OCI-LY7 (cell line): ENCODE measurements at regions of chr7 and their contacts with region 1.

Region 1: GRCh38 chr7:2403014-2403717 is at the start of gene CHST12:
- DNase-seq: peak; percentile 96
- H3K4me3 ChIP-seq: peak within 1 kb of the TSS; percentile 91
- H3K27ac ChIP-seq: peak within 1 kb of the TSS; percentile 21
- H3K4me1 ChIP-seq: peaks cover 50% of the 10 kb centered on the region
- CTCF ChIP-seq: no peak
- total RNA-seq, gene CHST12: 3.1 and 3.9 TPM in 2 replicates

Region 2: DNA sequence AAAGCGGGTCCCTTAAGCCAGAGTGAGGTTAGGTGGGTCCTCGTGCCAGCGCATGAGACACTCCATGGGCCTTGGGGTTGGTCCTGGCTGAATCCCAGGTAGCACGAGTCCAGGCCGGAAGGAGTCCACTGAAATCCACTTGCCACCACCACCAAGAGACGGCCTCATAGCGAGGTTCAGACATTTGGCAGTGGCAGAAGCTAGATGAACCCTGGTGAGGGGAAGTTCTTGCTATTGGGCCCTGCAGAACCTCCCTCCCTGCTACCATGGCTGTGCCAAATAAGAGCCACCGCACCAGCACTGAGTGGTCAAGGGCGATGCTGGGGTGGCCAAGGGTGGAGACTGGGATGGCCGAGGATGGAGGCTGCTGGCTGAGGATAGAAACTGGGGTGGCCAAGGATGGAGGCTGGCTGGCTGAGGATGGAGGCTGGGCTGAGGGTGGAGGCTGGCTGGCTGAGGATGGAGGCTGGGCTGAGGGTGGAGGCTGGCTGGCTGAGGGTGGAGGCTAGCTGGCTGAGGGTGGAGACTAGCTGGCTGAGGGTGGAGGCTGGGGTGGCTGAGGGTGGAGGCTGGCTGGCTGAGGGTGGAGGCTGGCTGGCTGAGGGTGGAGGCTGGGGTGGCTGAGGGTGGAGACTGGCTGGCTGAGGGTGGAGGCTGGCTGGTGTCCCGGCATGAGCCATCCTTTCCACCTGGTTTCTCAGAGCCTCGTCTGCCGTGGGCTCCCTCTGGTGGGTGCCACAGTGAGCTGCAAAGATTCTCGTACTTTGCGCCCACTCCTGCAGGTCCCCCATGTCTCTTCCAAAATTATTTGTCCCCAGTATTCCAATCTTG is 644.9 kb before region 1 on chr7:
- CTCF ChIA-PET with region 1: no interaction called
- POLR2A ChIA-PET with region 1: no interaction called
- intact Hi-C with region 1: loop called (anchors 10 kb)
- DNase-seq: peak; percentile 73
- H3K4me3 ChIP-seq: no peak overlapping the region
- H3K27ac ChIP-seq: no peak overlapping the region
- H3K4me1 ChIP-seq: peaks cover 45% of the 10 kb centered on the region
- CTCF ChIP-seq: peak; percentile 71

Region 3: DNA sequence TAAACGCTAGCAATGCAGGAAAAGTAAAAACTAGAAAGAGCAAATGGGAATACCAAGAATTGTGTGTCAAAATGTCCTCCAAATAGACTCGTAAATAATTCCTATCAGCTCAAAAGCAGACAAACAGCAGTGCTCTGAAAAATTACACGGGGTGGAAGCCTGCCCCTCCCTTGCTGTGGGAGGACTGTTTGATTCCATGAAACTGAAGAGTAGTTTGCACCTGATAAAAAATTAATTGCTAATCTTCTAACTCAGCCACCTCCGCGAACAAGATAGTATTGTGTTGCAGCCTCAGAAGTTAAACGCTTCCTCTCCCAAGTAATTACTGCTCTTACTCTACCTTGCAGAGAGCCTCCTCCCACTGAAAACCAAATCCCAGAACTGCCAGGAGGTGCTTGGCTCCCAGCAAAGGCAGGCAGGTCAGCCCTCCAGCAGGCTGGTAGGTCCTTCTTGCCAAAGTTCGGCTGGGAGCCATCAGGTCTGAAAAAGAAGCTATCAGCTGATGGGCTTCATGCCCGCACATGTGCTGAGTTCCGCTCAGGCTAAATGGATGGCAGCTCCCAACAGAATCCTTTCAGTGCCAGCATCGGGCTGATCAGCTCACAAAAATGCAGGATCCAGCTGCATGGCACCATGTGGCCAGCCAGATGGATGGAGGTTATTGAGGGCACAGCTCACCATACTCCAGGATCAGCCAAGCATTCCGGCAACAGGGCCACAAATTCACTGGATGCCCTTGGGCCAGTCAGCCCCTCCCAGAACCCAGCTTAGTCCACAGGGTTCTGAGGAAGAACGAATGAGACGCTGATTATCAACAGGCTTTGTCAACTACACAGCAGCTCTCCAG is 207.5 kb before region 1 on chr7:
- CTCF ChIA-PET with region 1: no interaction called
- POLR2A ChIA-PET with region 1: no interaction called
- intact Hi-C with region 1: no loop called
- DNase-seq: no peak
- H3K4me3 ChIP-seq: no peak overlapping the region
- H3K27ac ChIP-seq: no peak overlapping the region
- H3K4me1 ChIP-seq: no peaks in the 10 kb centered on the region
- CTCF ChIP-seq: no peak

Region 4: DNA sequence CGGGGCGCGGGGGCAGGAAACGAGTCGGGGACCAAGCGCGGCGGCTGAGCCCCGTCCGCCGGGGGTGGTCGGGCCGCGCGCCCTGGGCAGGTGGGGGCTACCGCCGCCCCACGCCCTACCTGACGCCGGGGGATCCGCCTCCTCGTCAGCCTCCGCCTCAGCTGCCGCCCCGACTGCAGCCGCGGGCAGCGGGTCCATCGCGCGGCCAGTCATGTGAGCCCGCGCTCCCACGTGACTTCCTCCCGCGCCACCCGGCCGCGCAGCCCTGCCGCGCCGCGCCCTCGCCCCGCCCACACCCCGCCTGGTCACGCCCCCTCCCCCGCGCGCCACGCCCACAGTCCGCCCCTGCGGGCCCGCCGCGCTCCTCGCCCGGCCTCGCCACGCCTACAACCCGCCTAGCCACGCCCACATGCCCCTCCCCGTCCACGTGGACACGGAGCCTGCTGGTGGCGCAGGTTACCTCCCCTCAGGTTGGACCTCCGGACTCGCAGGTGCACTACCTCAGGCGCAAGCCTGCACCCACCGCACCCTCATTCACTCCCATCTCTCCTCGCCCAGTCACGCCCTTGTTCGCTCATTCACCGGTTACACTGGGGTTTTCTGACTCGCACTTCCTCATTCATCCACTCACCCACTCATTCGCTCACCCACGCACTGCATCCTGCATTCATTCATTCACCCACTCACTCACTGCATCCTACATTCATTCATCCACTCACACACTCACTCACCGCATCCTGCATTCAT is 88.8 kb before region 1 on chr7 and contains the start of gene SNX8:
- CTCF ChIA-PET with region 1: no interaction called
- POLR2A ChIA-PET with region 1: no interaction called
- intact Hi-C with region 1: loop called (anchors 5 kb)
- DNase-seq: peak; percentile 86
- H3K4me3 ChIP-seq: peak within 1 kb of the TSS; percentile 97
- H3K27ac ChIP-seq: peak within 1 kb of the TSS; percentile 22
- H3K4me1 ChIP-seq: peaks cover 43% of the 10 kb centered on the region
- CTCF ChIP-seq: no peak
- total RNA-seq, gene SNX8: 4.3 and 12.1 TPM in 2 replicates

Region 5: GRCh38 chr7:2425749-2426148 is 22.6 kb after region 1 on chr7:
- CTCF ChIA-PET with region 1: no interaction called
- POLR2A ChIA-PET with region 1: interaction called, 8 read pairs
- intact Hi-C with region 1: loop called (anchors 1 kb)
- DNase-seq: peak; percentile 29
- H3K4me3 ChIP-seq: no peak overlapping the region
- H3K27ac ChIP-seq: no peak overlapping the region
- H3K4me1 ChIP-seq: peaks cover 13% of the 10 kb centered on the region
- CTCF ChIP-seq: no peak

Region 6: DNA sequence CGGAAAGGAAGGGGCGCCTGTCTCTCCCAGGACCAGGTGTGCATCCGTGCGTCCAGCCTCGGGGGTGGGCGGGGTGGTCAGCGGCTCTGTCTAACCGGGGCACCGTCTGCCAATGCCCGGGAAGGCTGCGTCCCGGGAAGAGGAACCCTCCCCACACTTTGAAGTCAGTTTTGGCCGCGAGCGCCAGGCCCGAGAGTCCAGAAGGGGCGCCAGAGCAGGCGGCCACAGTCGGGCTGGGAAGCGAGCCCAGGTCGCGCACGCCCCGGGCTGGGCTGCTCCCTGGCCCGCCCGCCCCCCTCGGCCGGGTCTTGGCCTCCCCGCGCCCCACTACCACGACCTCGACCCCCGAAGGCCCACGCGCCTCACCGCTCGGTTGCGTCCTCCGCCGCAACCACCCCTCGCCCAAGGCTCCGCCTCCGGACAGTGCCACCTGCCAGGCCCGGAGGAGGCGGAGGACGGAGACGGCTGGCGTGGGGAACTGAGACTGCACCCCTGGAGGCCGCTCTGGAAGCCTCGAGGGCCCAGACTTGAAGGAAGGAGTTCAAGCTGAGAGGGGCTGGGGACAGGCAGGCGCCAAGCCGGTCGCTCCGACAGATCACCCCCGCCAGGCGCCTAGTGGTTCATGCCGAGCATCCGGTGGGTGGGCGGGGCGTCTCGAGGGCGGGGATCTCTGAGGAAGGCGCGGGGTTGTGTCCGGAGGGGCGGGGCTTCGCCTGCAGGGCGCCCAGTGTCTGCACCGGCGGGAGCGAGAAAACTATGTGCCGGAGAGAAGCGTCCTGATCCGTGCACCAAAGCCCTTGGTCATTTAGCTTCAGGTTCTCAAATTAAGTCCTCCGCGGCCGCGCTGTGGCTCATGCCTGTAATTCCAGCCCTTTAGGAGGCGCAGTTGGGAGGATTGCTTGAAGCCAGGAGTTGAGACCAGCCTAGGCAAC is 152.2 kb after region 1 on chr7 and contains the start of gene BRAT1:
- CTCF ChIA-PET with region 1: no interaction called
- POLR2A ChIA-PET with region 1: interaction called, 3 read pairs
- intact Hi-C with region 1: loop called (anchors 5 kb)
- DNase-seq: peak; percentile 97
- H3K4me3 ChIP-seq: peak within 1 kb of the TSS; percentile 76
- H3K27ac ChIP-seq: peak within 1 kb of the TSS; percentile 82
- H3K4me1 ChIP-seq: peaks cover 44% of the 10 kb centered on the region
- CTCF ChIP-seq: peak; percentile 62
- total RNA-seq, gene BRAT1: 50.8 and 52.0 TPM in 2 replicates